ENCODE measurements at regions of chr19 and their contacts with region 1.

Region 1: GRCh38 chr19:5904352-5905113 is at the start of gene VMAC:
- DNase-seq: peak; percentile 100
- H3K4me3 Mint-ChIP-seq: peak within 1 kb of the TSS; percentile 99
- H3K27ac Mint-ChIP-seq: peak within 1 kb of the TSS; percentile 97
- H3K4me1 Mint-ChIP-seq: peaks cover 30% of the 10 kb centered on the region
- H3K27me3 Mint-ChIP-seq: no peaks in the 10 kb centered on the region
- total RNA-seq, gene VMAC: 3.5 and 4.2 TPM in 2 replicates

Region 2: DNA sequence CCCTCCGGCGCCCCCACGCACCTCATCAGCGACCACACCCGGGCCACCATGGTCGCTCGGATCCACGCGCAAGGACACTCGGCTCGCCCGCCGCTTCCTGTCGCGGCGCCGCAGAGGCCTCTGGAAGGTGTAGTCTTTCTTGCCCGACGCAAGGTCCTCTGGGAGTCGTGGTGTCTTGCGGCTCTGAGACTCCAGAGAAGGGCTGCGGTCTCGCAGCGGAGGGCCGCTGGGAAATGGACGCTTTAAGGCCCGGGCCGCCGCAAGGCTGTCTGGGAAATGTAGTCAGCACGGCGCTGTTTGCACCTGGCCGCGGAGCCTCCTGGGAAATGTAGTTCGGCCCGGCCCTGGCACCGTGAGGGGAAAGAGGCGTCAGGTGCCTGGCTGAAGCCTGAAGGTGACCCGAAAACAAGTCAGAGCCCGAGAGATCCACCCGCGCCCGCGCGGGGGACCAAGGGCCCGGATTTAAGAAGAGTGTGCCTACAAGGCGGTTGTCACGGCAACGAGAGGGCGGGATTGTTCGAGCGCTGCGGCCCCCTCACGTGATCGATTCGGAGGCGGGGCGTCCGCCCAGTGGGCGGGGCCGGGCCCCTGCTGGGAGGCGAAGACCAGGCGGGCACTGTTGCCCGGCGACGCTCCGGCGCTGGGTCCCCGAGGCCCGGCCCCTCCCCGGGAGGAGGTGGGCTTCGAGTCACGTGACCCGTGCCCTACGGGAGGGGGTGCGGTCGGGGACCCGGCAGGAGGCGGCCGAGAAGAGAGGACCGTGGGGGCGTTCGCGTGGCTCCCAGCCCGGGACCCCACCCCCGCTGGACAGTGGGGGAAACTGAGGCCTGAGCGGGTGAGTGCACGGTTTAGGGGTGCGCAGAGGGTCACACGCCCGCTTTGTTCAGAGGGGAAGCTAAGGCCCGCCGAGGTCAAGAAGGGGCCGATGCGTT is 223.8 kb before region 1 on chr19 and contains the starts of genes HSD11B1L and MICOS13:
- intact Hi-C with region 1: loop called (anchors 1 kb)
- DNase-seq: peak; percentile 97
- H3K4me3 Mint-ChIP-seq: peak within 1 kb of the TSS; percentile 99
- H3K27ac Mint-ChIP-seq: peak within 1 kb of the TSS; percentile 94
- H3K4me1 Mint-ChIP-seq: peaks cover 19% of the 10 kb centered on the region
- H3K27me3 Mint-ChIP-seq: peaks cover 3% of the 10 kb centered on the region
- total RNA-seq, gene HSD11B1L: 1.9 TPM in 2 replicates
- total RNA-seq, gene MICOS13: 57.4 and 60.6 TPM in 2 replicates

Region 3: GRCh38 chr19:5790573-5791520 is 113.7 kb before region 1 on chr19 and contains the start of gene DUS3L:
- intact Hi-C with region 1: loop called (anchors 1 kb)
- DNase-seq: peak; percentile 95
- H3K4me3 Mint-ChIP-seq: peak within 1 kb of the TSS; percentile 98
- H3K27ac Mint-ChIP-seq: peak within 1 kb of the TSS; percentile 100
- H3K4me1 Mint-ChIP-seq: peaks cover 5% of the 10 kb centered on the region
- H3K27me3 Mint-ChIP-seq: no peaks in the 10 kb centered on the region
- total RNA-seq, gene DUS3L: 85.9 and 87.1 TPM in 2 replicates

Region 4: GRCh38 chr19:5953680-5954213 is 49.2 kb after region 1 on chr19:
- intact Hi-C with region 1: loop called (anchors 1 kb)
- DNase-seq: peak; percentile 24
- H3K4me3 Mint-ChIP-seq: peak overlapping the region; percentile 76
- H3K27ac Mint-ChIP-seq: peak overlapping the region; percentile 98
- H3K4me1 Mint-ChIP-seq: peaks cover 75% of the 10 kb centered on the region
- H3K27me3 Mint-ChIP-seq: no peaks in the 10 kb centered on the region

Region 5: DNA sequence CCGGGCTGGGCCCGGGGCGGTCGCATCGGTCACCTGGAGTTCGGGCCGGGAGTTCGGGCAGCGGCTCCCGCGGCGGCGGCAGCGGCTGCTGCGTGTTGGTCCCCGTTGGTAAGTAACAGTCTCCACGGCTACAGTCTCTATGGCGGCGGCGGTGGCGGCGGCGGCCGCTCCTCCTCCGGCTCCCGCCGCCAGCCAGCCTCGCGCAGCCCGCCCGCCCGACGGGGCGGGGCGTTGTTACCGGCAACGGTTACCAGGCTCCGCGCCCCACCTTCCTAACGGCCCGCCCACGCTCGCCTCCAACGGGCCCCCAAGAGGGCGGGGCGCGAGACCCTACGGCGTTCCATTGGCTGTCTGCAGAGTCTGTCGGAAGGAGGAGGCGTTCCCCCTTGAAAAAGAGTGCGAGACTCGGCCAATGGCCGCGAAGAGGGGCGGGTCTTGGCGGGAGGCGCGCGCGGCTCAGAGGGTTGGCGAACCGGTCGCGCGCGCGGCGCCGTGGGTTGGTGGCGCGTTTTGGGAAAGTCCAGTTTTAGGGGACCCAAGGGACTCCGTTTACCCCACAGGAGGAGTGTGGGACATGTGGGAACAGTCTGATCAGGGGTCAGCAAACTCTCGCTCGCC is 205.9 kb after region 1 on chr19 and contains the start of gene RFX2:
- intact Hi-C with region 1: loop called (anchors 5 kb)
- DNase-seq: peak; percentile 99
- H3K4me3 Mint-ChIP-seq: peak within 1 kb of the TSS; percentile 86
- H3K27ac Mint-ChIP-seq: peak within 1 kb of the TSS; percentile 79
- H3K4me1 Mint-ChIP-seq: peaks cover 27% of the 10 kb centered on the region
- H3K27me3 Mint-ChIP-seq: peaks cover 17% of the 10 kb centered on the region
- total RNA-seq, gene RFX2: 9.2 and 10.2 TPM in 2 replicates

Region 6: GRCh38 chr19:6590827-6591319 is 686.3 kb after region 1 on chr19 and contains the start of gene CD70:
- intact Hi-C with region 1: no loop called
- DNase-seq: peak; percentile 70
- H3K4me3 Mint-ChIP-seq: peak within 1 kb of the TSS; percentile 95
- H3K27ac Mint-ChIP-seq: peak within 1 kb of the TSS; percentile 87
- H3K4me1 Mint-ChIP-seq: peaks cover 66% of the 10 kb centered on the region
- H3K27me3 Mint-ChIP-seq: peaks cover 33% of the 10 kb centered on the region
- total RNA-seq, gene CD70: 55.4 and 61.6 TPM in 2 replicates